ENCODE measurements at regions of chr10 and their contacts with region 1.

Region 1: GRCh38 chr10:49053053-49053997 is 62.0 kb downstream of the VSTM4 start:
- DNase-seq: peak; percentile 79
- ATAC-seq: peak; percentile 88
- H3K4me3 ChIP-seq: no peak overlapping the region
- H3K27ac ChIP-seq: no peak overlapping the region
- H3K4me1 ChIP-seq: peaks cover 10% of the 10 kb centered on the region; the same call in 1 of the 2 replicates
- H3K27me3 ChIP-seq: no peaks in the 10 kb centered on the region; a peak in 1 of 4 replicates
- CTCF ChIP-seq: no peak
- EP300 ChIP-seq: peak; percentile 50 to 66; a peak in 2 of 4 replicates
- POLR2A ChIP-seq: no peak
- RAD21 ChIP-seq: no peak

Region 2: DNA sequence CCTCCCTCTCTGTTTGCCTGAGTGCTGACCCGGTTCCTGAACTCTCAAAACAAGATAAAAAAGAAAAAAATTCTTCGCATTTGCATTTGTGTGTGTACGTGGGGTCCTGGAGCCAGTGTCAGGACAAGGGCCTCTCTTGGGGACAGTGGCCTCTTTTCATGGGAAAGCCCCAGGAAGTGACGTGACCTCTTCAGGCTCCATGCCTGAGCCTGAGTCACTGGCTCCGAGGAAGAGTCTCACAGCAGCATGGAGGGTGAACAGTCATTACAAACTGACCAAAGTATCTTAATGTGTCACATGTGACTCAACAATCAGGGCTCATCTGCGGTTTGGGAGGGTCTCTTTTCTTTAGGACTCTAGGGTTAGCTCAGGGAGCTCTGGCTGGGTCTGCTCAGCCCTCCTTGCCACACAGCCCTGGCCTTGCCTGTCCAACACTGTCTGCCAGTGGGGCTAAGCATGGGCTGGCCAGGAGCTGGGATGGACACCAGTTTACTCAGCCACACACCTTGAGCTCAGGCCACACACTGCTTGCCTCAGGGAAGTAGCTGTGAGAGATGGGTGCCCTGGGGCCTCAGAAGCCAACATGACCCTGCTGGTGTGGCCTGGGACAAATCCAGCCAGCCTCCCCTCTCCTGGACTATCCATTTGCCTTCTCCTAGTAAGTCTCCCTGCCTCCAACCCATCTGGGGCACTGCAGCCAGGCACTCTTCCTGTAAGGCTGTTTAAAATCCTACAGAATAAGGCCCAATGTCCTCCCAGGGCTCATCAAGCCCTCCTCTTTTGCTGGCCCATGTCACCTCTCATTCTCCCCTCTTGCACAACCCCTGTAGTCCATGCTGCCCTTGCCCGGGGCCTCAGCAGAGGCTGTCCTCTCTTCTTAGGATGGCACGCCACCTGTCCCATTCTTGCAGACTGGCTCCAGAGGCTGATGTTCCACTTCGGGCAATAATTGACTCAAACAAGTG is 124.3 kb after region 1 on chr10:
- CTCF ChIA-PET with region 1: no interaction called
- POLR2A ChIA-PET with region 1: no interaction called
- RAD21 ChIA-PET with region 1: interaction called, 3 read pairs
- SMC1A ChIA-PET with region 1: interaction called, 6 read pairs
- in situ Hi-C with region 1: no loop called
- intact Hi-C with region 1: loop called (anchors 5 kb)
- DNase-seq: peak; percentile 85
- ATAC-seq: peak; percentile 85
- H3K4me3 ChIP-seq: no peak overlapping the region
- H3K27ac ChIP-seq: peak overlapping the region; percentile 87
- H3K4me1 ChIP-seq: peaks cover 51% of the 10 kb centered on the region
- H3K27me3 ChIP-seq: no peaks in the 10 kb centered on the region
- CTCF ChIP-seq: no peak
- EP300 ChIP-seq: peak; percentile 67 to 83
- POLR2A ChIP-seq: no peak
- RAD21 ChIP-seq: peak; percentile 21; the same call in 1 of the 2 replicates

Measured in GM12878 (cell line).